Mammary epithelial cell (primary cell): ENCODE measurements at regions of chrX and their contacts with region 1.

Region 1: DNA sequence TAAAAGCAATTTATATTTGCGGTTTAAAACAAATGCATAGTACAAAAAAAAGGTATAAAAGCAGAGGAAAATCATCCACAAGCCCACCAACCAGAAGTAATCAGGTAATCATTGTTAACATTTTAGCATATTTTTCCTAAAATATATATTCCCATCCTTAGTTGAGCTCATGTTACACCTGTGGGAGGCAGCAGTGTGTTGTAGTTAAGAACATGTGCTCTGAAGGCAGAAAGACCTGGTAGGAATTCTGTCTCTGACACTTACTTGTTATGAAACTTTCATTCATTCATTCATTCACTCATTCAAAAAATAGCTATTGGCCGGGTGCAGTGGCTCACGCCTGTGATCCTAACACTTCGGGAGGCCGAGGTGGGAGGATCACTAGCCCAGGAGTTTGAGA is 15.4 kb upstream of the CDKL5 start:
- DNase-seq: no peak
- H3K4me3 ChIP-seq: no peak overlapping the region
- H3K27ac ChIP-seq: no peak overlapping the region
- H3K4me1 ChIP-seq: no peaks in the 10 kb centered on the region
- H3K27me3 ChIP-seq: no peaks in the 10 kb centered on the region
- CTCF ChIP-seq: peak; percentile 24 to 48

Region 2: GRCh38 chrX:18833071-18833731 is 423.2 kb after region 1 on chrX:
- CTCF ChIA-PET with region 1: no interaction called
- dilution Hi-C with region 1: no loop called
- in situ Hi-C with region 1: no loop called
- intact Hi-C with region 1: no loop called
- DNase-seq: no peak
- H3K4me3 ChIP-seq: no peak overlapping the region
- H3K27ac ChIP-seq: no peak overlapping the region
- H3K4me1 ChIP-seq: no peaks in the 10 kb centered on the region
- H3K27me3 ChIP-seq: no peaks in the 10 kb centered on the region
- CTCF ChIP-seq: no peak

Region 3: DNA sequence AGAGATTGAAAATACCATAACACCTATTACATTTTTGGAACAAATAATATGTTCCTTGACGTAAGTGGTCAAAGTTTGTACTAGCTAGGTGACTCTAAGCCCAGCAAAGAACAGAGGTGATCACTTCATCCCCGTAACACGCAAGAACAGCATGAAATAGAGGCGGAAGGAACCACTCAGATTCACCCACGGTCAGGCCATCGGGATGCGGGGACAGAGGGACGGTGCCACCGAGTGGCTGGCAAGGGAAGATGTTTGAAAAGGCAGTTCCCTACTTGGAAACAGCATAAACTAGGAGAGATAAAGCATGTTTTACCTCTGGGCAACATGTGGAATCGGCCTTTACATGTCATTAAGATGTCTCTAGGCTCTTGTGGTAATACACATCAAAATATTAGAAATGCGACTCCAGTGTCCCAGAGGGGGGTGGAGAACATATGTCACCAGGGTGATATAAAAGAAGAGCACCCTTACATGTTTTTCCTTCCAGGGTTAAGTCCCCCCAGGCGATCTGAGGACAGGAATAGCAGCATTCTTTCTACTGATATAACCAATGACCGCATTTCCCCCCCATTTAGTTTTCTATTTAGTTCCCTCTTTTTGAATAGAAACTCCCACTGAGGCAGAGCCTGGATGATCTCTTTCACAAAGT is 489.9 kb after region 1 on chrX:
- CTCF ChIA-PET with region 1: interaction called, 16 read pairs
- dilution Hi-C with region 1: loop called (anchors 25 kb)
- in situ Hi-C with region 1: no loop called
- intact Hi-C with region 1: loop called (anchors 1 kb)
- DNase-seq: no peak
- H3K4me3 ChIP-seq: no peak overlapping the region
- H3K27ac ChIP-seq: no peak overlapping the region
- H3K4me1 ChIP-seq: peaks cover 13% of the 10 kb centered on the region
- H3K27me3 ChIP-seq: no peaks in the 10 kb centered on the region
- CTCF ChIP-seq: peak in 1 of 2 donors; percentile 30

Region 4: DNA sequence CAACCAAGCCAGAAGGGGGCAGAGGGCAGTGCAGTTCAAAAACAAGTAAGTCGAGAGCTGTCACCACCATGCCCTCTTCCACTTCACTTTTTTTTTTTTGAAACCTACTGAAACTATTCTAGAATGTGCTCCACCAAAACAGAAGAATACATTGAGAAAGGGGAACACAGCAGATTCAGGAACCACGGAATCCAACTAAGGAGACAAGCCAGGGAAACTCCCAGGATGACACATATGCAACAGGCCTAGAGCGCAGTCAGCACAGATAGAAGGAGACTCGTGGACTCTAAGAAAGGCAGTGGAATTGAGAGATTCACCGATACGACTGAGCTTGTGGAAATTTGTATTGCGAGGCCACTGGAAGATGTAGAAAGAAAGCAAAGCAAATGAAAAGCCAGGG is 507.8 kb after region 1 on chrX:
- CTCF ChIA-PET with region 1: no interaction called
- dilution Hi-C with region 1: loop called (anchors 25 kb)
- in situ Hi-C with region 1: loop called in 1 of 2 experiments (anchors 10 kb)
- intact Hi-C with region 1: no loop called
- DNase-seq: no peak
- H3K4me3 ChIP-seq: no peak overlapping the region
- H3K27ac ChIP-seq: no peak overlapping the region
- H3K4me1 ChIP-seq: no peaks in the 10 kb centered on the region
- H3K27me3 ChIP-seq: no peaks in the 10 kb centered on the region
- CTCF ChIP-seq: no peak

Region 5: GRCh38 chrX:19334945-19335626 is 925.0 kb after region 1 on chrX:
- CTCF ChIA-PET with region 1: interaction called, 29 read pairs
- dilution Hi-C with region 1: no loop called
- in situ Hi-C with region 1: no loop called
- intact Hi-C with region 1: no loop called
- DNase-seq: peak; percentile 5
- H3K4me3 ChIP-seq: no peak overlapping the region
- H3K27ac ChIP-seq: no peak overlapping the region
- H3K4me1 ChIP-seq: no peaks in the 10 kb centered on the region
- H3K27me3 ChIP-seq: no peaks in the 10 kb centered on the region
- CTCF ChIP-seq: peak; percentile 23 to 41